B cell (primary cell): ENCODE measurements at regions of chr7 and their contacts with region 1.

Region 1: GRCh38 chr7:35869810-35870209 is 69.0 kb downstream of the SEPTIN7 start:
- DNase-seq: no peak
- ATAC-seq: no peak
- H3K4me3 ChIP-seq: no peak overlapping the region
- H3K4me3 Mint-ChIP-seq: no peak overlapping the region
- H3K27ac ChIP-seq: no peak overlapping the region
- H3K27ac Mint-ChIP-seq: no peak overlapping the region
- H3K4me1 ChIP-seq: peaks cover 9 to 16% of the 10 kb centered on the region in 2 donors
- H3K4me1 Mint-ChIP-seq: peaks cover 33% of the 10 kb centered on the region
- H3K27me3 ChIP-seq: no peaks in the 10 kb centered on the region
- H3K27me3 Mint-ChIP-seq: no peaks in the 10 kb centered on the region
- CTCF ChIP-seq: no peak

Region 2: DNA sequence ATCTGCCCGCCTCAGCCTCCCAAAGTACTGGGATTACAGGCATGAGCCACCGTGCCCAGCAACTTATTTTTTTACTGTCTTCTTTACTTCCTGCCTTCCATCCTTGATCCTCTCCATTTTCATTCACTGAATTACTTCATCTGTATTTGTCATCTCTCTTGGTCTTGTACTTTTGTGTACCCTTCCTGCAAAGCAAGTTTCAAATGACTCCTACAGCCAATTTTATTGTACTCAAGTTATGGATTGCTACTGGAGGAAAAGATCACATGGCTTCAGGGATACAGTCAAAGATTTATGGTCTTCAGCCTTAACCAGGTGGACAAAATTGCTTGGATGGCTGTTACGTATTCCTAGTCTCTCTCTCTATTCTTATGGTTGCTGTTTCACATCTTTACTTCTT is 46.4 kb before region 1 on chr7:
- CTCF ChIA-PET with region 1: interaction called, 3 read pairs
- POLR2A ChIA-PET with region 1: no interaction called
- intact Hi-C with region 1: loop called (anchors 5 kb)
- DNase-seq: no peak
- ATAC-seq: no peak
- H3K4me3 ChIP-seq: no peak overlapping the region
- H3K4me3 Mint-ChIP-seq: no peak overlapping the region
- H3K27ac ChIP-seq: no peak overlapping the region
- H3K27ac Mint-ChIP-seq: no peak overlapping the region
- H3K4me1 ChIP-seq: peaks cover 20 to 28% of the 10 kb centered on the region in 2 donors
- H3K4me1 Mint-ChIP-seq: peaks cover 40% of the 10 kb centered on the region
- H3K27me3 ChIP-seq: no peaks in the 10 kb centered on the region
- H3K27me3 Mint-ChIP-seq: no peaks in the 10 kb centered on the region
- CTCF ChIP-seq: no peak

Region 3: GRCh38 chr7:35900651-35901050 is 30.8 kb after region 1 on chr7:
- CTCF ChIA-PET with region 1: no interaction called
- POLR2A ChIA-PET with region 1: no interaction called
- intact Hi-C with region 1: loop called (anchors 5 kb)
- DNase-seq: no peak
- ATAC-seq: no peak
- H3K4me3 ChIP-seq: no peak overlapping the region
- H3K4me3 Mint-ChIP-seq: no peak overlapping the region
- H3K27ac ChIP-seq: peak overlapping the region in 1 of 2 donors; percentile 14
- H3K27ac Mint-ChIP-seq: no peak overlapping the region
- H3K4me1 ChIP-seq: no peaks in the 10 kb centered on the region
- H3K4me1 Mint-ChIP-seq: no peaks in the 10 kb centered on the region
- H3K27me3 ChIP-seq: no peaks in the 10 kb centered on the region
- H3K27me3 Mint-ChIP-seq: no peaks in the 10 kb centered on the region
- CTCF ChIP-seq: no peak